Activated T-helper 2 cell treated with anti-CD3 and anti-CD28 coated beads, Interferon-gamma antibody, Interleukin-2, Interleukin-4, amounts not matched to agents 10 μg/mL and 5 μg/mL and 100 μg/mL, durations not matched to agents 14 hours and 24 hours and 36 hours (primary cell): ENCODE measurements at regions of chr15 and their contacts with region 1.

Region 1: GRCh38 chr15:41972253-41973242 is at the start of gene EHD4:
- DNase-seq: peak; percentile 94
- H3K4me3 Mint-ChIP-seq: peak within 1 kb of the TSS; percentile 83
- H3K27ac Mint-ChIP-seq: peak within 1 kb of the TSS; percentile 87
- H3K4me1 Mint-ChIP-seq: peaks cover 50% of the 10 kb centered on the region
- H3K27me3 Mint-ChIP-seq: peaks cover 12% of the 10 kb centered on the region
- total RNA-seq, gene EHD4: 22.3 and 22.7 TPM in 2 replicates

Region 2: DNA sequence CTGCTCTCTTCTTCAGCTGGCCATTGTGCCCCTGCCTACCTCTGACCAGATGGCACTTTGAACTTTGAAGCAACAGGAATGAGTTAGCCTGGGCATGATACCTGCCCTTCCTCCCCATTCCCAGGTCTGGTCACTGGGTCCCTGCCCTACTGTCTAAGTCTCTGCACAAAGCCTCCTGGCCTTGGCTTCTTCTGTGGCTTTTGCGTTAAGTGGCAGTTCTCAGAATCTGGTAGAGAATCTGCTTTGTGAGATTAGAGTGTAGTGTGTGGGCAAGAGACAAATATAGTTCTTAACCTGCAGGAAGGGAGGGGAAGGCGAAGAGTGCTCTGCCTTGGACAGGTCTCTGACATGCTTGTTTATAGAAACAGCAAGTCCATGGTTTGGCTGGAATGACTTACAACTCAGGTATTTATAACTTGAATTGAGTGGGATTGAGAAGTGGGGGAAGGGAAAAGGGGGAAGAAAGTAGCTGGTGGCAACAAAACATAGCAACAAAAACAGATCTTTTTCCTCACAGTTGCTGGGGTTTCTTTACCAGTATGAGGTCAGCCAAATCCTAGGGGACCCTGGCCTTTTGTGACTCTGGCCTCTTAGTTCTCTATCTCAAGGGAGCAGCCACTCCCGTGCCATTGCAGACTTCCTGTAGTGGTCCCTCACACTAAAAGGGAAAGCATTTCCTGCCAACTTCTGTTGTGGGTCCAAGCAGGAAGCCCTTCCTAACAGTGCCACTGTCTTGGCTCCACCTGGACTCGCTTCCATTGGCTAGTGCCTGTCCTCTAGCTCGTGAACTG is 181.6 kb before region 1 on chr15:
- intact Hi-C with region 1: no loop called
- DNase-seq: no peak
- H3K4me3 Mint-ChIP-seq: peak overlapping the region; percentile 41
- H3K27ac Mint-ChIP-seq: peak overlapping the region; percentile 73
- H3K4me1 Mint-ChIP-seq: peaks cover 46% of the 10 kb centered on the region
- H3K27me3 Mint-ChIP-seq: no peaks in the 10 kb centered on the region

Region 3: DNA sequence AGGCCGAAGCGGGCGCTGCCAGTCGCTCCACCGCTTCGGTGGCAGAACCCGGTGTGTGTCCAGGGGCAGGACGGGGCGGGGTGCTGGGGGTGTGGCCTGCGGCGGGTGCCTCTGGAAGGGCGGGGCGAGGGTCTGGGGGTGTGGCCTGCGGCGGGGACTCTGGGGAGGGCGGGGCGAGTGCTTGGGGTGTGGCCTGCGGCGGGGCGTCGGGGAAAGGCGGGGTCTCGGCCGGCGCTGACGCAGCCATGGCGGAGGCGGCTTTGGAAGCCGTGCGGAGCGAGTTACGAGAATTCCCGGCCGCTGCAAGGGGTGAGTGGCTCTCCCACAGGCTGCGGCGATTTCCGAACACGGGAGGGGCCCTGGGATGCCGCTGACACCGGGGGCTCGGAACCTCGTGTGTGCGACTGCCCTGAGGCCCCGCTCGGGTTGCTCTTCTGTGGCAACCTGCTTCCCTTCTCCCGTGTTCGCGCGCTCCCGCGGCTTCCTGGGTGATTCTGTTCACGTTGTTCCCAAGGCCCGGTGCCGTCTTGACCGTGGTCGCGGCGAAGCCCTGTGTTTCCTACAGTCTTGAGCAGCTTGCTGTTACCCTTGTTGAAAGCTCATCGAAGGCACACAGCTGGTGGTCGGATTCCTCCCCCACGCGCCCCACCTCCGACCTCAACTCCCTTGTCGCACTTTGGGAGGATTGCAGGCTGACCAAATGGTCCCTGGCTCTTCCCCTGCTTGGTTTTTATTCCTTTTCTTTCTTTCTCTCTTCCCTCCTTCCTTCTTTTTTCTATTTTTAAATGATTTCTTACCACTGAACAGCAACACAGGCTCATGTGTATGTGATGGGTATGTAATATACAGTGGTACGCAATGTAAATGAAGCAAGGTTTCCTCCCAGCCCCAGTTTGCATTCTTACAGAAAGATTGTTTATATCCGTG is 144.4 kb before region 1 on chr15 and contains the start of gene JMJD7:
- intact Hi-C with region 1: loop called (anchors 5 kb)
- DNase-seq: peak; percentile 90
- H3K4me3 Mint-ChIP-seq: peak within 1 kb of the TSS; percentile 95
- H3K27ac Mint-ChIP-seq: peak within 1 kb of the TSS; percentile 77
- H3K4me1 Mint-ChIP-seq: peaks cover 33% of the 10 kb centered on the region
- H3K27me3 Mint-ChIP-seq: no peaks in the 10 kb centered on the region
- total RNA-seq, gene JMJD7: 15.7 and 20.0 TPM in 2 replicates

Region 4: GRCh38 chr15:41936649-41937567 is 35.6 kb before region 1 on chr15:
- intact Hi-C with region 1: loop called (anchors 1 kb)
- DNase-seq: peak; percentile 71
- H3K4me3 Mint-ChIP-seq: peak overlapping the region; percentile 69
- H3K27ac Mint-ChIP-seq: peak overlapping the region; percentile 100
- H3K4me1 Mint-ChIP-seq: peaks cover 60% of the 10 kb centered on the region
- H3K27me3 Mint-ChIP-seq: no peaks in the 10 kb centered on the region

Region 5: GRCh38 chr15:41957021-41957897 is 15.3 kb before region 1 on chr15:
- intact Hi-C with region 1: loop called (anchors 1 kb)
- DNase-seq: no peak
- H3K4me3 Mint-ChIP-seq: peak overlapping the region; percentile 40
- H3K27ac Mint-ChIP-seq: peak overlapping the region; percentile 1
- H3K4me1 Mint-ChIP-seq: peaks cover 32% of the 10 kb centered on the region
- H3K27me3 Mint-ChIP-seq: no peaks in the 10 kb centered on the region

Region 6: GRCh38 chr15:41989259-41989933 is 16.8 kb after region 1 on chr15:
- intact Hi-C with region 1: no loop called
- DNase-seq: peak; percentile 69
- H3K4me3 Mint-ChIP-seq: no peak overlapping the region
- H3K27ac Mint-ChIP-seq: no peak overlapping the region
- H3K4me1 Mint-ChIP-seq: no peaks in the 10 kb centered on the region
- H3K27me3 Mint-ChIP-seq: no peaks in the 10 kb centered on the region